ENCODE measurements at regions of chr3 and their contacts with region 1.

Region 1: GRCh38 chr3:12545300-12545791 is at the start of gene MKRN2OS:
- DNase-seq: peak; percentile 42 to 61
- H3K4me3 ChIP-seq: peak within 1 kb of the TSS in 2 of 3 donors; percentile 37 to 60
- H3K27ac ChIP-seq: peak within 1 kb of the TSS; percentile 48 to 58
- H3K4me1 ChIP-seq: no peaks in the 10 kb centered on the region
- H3K27me3 ChIP-seq: no peaks in the 10 kb centered on the region
- CTCF ChIP-seq: no peak
- POLR2A ChIP-seq: no peak
- total RNA-seq, gene MKRN2OS: 1.0 to 3.6 TPM in 2 of 3 donors, not detected in the other

Region 2: DNA sequence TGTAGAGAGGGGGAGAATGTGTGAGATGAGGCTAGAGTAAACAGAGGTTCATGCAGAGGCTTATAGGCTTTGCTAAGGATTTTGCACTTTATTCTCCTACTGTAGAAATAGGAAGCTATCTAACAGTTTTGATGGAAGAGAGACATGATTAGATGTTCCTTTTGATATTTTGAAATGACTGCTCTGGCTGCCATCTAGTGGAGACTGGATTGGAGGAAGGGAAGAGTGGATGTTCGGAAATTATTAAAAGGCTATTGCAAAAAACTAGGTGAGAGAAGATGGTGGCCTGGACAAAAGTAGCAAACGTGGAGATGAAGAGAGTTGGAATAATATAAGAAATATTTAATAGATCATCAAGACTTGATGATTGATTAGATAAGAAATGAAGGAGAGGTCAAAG is 498.9 kb before region 1 on chr3:
- intact Hi-C with region 1: loop called (anchors 5 kb)
- DNase-seq: no peak
- H3K4me3 ChIP-seq: no peak overlapping the region
- H3K27ac ChIP-seq: no peak overlapping the region
- H3K4me1 ChIP-seq: no peaks in the 10 kb centered on the region
- H3K27me3 ChIP-seq: no peaks in the 10 kb centered on the region
- CTCF ChIP-seq: no peak
- POLR2A ChIP-seq: no peak